Naive thymus-derived CD4-positive, alpha-beta T cell (primary cell): ENCODE measurements at regions of chr12 and their contacts with region 1.

Region 1: DNA sequence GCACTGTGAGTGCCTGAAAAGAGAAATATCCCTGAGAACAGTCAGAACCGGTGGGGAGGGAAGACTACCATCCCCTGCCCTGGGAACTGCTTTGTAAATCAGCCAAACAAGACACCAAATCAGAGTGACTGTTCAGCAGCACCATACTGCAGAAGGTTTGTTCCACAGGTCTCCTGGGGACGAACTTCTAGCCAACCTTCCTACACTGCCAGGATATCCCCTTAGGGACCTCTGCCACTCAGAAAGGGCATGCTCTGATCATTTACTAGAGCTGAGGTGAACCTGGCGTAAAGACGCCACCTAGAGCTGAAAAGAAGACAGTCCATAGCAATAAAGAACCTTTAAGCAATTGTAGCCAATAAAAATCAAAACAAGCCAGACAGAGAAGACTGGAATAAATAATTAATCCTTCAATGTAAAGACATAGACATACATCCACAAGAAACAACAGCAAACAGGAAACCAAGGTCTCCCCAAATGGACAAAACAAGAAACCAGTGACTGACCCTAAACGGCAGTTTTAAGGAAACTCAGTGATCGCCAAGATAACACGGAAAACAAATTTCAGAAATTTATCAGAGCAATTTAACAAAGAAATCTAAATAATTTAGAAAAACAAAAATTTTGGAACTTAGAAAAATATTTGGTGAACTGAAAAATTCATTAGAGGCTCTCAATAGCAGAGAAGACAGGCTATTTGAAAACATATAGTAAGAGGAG is 228.1 kb upstream of the AMIGO2 start:
- DNase-seq: peak in 8 of 9 donors; percentile 39 to 76 (median 62)
- ATAC-seq: peak; percentile 96
- H3K4me3 ChIP-seq: peak overlapping the region; percentile 56
- H3K4me3 Mint-ChIP-seq: peak overlapping the region; percentile 91 to 98 (median 94)
- H3K27ac ChIP-seq: peak overlapping the region; percentile 69
- H3K27ac Mint-ChIP-seq: peak overlapping the region; percentile 89 to 97 (median 95)
- H3K4me1 ChIP-seq: peaks cover 0 to 3% of the 10 kb centered on the region in 2 donors
- H3K4me1 Mint-ChIP-seq: peaks cover 27 to 61% (median 51%) of the 10 kb centered on the region in 7 donors
- H3K27me3 ChIP-seq: no peaks in the 10 kb centered on the region
- H3K27me3 Mint-ChIP-seq: no peaks in the 10 kb centered on the region

Region 2: DNA sequence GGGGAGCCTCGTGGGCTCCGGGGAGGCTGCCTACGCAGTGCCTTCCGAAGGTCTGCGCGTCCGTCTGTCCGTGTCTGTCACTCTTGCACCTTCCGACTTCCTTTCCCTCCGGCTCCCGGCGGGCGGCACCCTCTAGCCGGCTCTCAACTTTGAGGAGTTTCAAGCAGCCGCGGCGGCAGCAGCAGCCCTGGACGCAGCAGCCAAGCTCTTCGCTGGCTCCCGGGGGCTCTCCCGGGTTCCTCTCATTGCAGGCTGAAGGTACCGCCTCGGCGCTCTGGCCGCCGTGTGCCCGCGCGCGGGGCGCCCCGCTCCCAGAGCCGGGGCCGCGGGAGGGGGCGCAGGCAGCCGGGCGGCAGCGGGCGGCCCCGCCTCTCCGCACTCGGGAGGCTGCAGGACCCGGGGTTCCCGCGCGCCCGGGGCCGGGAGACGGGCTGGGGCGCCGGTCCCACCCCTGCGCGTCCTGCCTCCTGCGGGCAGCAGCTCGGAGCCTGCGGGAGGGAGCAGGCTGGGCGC is 228.3 kb before region 1 on chr12 and contains the starts of genes AMIGO2 and PCED1B:
- CTCF ChIA-PET with region 1: interaction called, 6 read pairs
- POLR2A ChIA-PET with region 1: interaction called, 24 read pairs
- intact Hi-C with region 1: loop called (anchors 1 kb)
- DNase-seq: peak; percentile 31 to 72 (median 51)
- ATAC-seq: peak; percentile 71
- H3K4me3 ChIP-seq: peak within 1 kb of the TSS; percentile 84
- H3K4me3 Mint-ChIP-seq: peak within 1 kb of the TSS; percentile 91 to 100 (median 96)
- H3K27ac ChIP-seq: peak within 1 kb of the TSS; percentile 80
- H3K27ac Mint-ChIP-seq: peak within 1 kb of the TSS; percentile 87 to 99 (median 96)
- H3K4me1 ChIP-seq: peaks cover 39 to 45% of the 10 kb centered on the region in 2 donors
- H3K4me1 Mint-ChIP-seq: peaks cover 44 to 83% (median 74%) of the 10 kb centered on the region in 7 donors
- H3K27me3 ChIP-seq: no peaks in the 10 kb centered on the region
- H3K27me3 Mint-ChIP-seq: no peaks in the 10 kb centered on the region
- total RNA-seq, gene AMIGO2: 6.8 to 13.5 (median 12.8) TPM
- total RNA-seq, gene PCED1B: 41.4 to 98.3 (median 70.0) TPM

Region 3: GRCh38 chr12:47190271-47190750 is 117.5 kb before region 1 on chr12:
- CTCF ChIA-PET with region 1: interaction called, 15 read pairs
- POLR2A ChIA-PET with region 1: interaction called, 12 read pairs
- intact Hi-C with region 1: loop called (anchors 1 to 5 kb)
- DNase-seq: no peak
- ATAC-seq: no peak
- H3K4me3 ChIP-seq: no peak overlapping the region
- H3K4me3 Mint-ChIP-seq: peak overlapping the region; percentile 42 to 87 (median 76)
- H3K27ac ChIP-seq: peak overlapping the region; percentile 61
- H3K27ac Mint-ChIP-seq: peak overlapping the region; percentile 81 to 98 (median 93)
- H3K4me1 ChIP-seq: peaks cover 52 to 77% of the 10 kb centered on the region in 2 donors
- H3K4me1 Mint-ChIP-seq: peaks cover 69 to 98% (median 93%) of the 10 kb centered on the region in 7 donors
- H3K27me3 ChIP-seq: no peaks in the 10 kb centered on the region
- H3K27me3 Mint-ChIP-seq: no peaks in the 10 kb centered on the region

Region 4: DNA sequence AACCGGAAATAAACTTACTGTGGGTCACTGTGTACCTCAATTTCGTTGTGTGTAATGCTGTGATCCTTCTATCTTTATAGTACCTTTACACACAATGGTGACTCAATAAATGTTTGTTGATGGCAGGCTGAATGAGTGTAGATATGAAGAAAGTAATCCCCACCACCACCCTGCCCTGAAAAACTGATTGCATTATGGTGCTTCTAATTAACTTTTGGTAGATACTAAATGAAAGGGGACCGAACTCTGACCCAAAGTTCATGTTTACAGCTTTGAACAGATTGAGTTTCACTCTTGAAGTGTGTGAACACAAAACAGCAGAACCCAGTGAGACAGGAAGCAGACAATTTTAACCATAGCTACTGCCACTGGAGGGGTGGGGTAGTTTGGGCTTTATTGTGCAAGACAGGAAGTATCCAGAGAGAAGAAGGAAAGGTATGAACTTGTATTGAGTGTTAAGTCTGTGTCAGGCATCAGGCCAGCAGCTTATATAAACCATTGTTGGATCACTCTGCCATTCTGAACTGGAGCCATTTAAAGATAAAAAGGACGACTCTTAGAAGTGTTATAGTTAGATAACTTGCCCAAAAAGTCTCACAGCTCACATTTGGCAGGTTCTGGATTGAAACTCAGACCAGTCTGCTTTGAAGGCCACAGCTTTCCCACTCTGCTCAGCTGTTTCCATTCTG is 31.1 kb before region 1 on chr12:
- CTCF ChIA-PET with region 1: interaction called, 5 read pairs
- POLR2A ChIA-PET with region 1: interaction called, 30 read pairs
- intact Hi-C with region 1: loop called (anchors 1 to 2 kb)
- DNase-seq: peak; percentile 12 to 89 (median 84)
- ATAC-seq: peak; percentile 97
- H3K4me3 ChIP-seq: peak overlapping the region; percentile 31
- H3K4me3 Mint-ChIP-seq: peak overlapping the region; percentile 51 to 83 (median 74)
- H3K27ac ChIP-seq: peak overlapping the region; percentile 69
- H3K27ac Mint-ChIP-seq: peak overlapping the region; percentile 90 to 98 (median 92)
- H3K4me1 ChIP-seq: peaks cover 28 to 73% of the 10 kb centered on the region in 2 donors
- H3K4me1 Mint-ChIP-seq: peaks cover 42 to 97% (median 90%) of the 10 kb centered on the region in 7 donors
- H3K27me3 ChIP-seq: no peaks in the 10 kb centered on the region
- H3K27me3 Mint-ChIP-seq: no peaks in the 10 kb centered on the region

Region 5: GRCh38 chr12:47408171-47408871 is 100.5 kb after region 1 on chr12:
- CTCF ChIA-PET with region 1: interaction called, 3 read pairs
- POLR2A ChIA-PET with region 1: interaction called, 8 read pairs
- intact Hi-C with region 1: loop called in 1 of 2 experiments (anchors 1 kb)
- DNase-seq: peak in 5 of 9 donors; percentile 22 to 55 (median 42)
- ATAC-seq: peak; percentile 71
- H3K4me3 ChIP-seq: no peak overlapping the region
- H3K4me3 Mint-ChIP-seq: peak overlapping the region in 7 of 10 donors; percentile 19 to 66 (median 49)
- H3K27ac ChIP-seq: peak overlapping the region; percentile 3
- H3K27ac Mint-ChIP-seq: peak overlapping the region; percentile 22 to 91 (median 83)
- H3K4me1 ChIP-seq: peaks cover 13 to 65% of the 10 kb centered on the region in 2 donors
- H3K4me1 Mint-ChIP-seq: peaks cover 36 to 89% (median 76%) of the 10 kb centered on the region in 7 donors
- H3K27me3 ChIP-seq: no peaks in the 10 kb centered on the region
- H3K27me3 Mint-ChIP-seq: no peaks in the 10 kb centered on the region